ENCODE measurements at regions of chr2 and their contacts with region 1.

Region 1: GRCh38 chr2:217804786-217805667 is 197.8 kb downstream of the TNS1 start:
- DNase-seq: no peak
- H3K4me3 ChIP-seq: no peak overlapping the region
- CTCF ChIP-seq: no peak

Region 2: DNA sequence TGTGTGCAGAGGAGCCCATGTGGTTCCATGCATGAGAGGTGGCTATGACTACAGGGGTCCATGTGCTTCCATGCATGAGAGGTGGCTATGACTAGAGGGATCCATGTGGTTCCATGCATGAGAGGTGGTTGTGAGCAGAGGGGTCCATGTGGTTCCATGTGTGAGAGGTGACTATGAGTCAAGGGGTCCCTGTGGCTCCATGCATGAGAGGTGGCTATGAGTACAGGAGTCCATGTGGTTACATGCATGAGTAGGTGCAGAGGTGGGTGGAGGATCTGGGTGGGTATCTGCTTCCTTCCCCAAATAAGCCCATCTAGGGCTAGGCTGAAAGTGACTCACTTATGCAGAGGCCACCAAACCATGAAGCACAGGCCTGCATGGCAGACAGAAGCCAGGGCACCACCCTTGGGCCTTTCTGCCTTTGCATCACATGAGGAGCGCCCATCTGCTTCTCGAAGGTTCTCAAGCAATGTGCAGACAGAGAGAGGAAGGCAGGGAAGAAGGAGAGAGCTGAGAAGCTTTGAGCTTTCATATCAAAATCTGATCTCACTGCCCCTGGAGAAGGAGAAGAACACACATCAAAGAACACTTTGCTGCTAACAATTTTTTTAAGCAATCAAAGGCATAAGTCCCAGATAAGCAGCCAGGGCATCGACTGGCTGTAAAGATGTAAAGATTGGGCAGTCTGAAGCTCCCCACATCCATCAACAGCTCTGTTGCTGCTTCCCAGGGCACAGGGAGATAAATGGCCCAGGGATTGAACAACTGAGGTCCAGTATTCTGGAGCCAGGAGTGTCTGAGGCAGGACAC is 60.1 kb after region 1 on chr2:
- in situ Hi-C with region 1: loop called (anchors 5 kb)
- DNase-seq: no peak
- H3K4me3 ChIP-seq: no peak overlapping the region
- CTCF ChIP-seq: no peak

Region 3: GRCh38 chr2:217980036-217980435 is 175.0 kb after region 1 on chr2:
- in situ Hi-C with region 1: loop called (anchors 5 kb)
- DNase-seq: no peak
- H3K4me3 ChIP-seq: no peak overlapping the region
- CTCF ChIP-seq: no peak